AG04449 (cell line): ENCODE measurements at regions of chr1 and their contacts with region 1.

Region 1: DNA sequence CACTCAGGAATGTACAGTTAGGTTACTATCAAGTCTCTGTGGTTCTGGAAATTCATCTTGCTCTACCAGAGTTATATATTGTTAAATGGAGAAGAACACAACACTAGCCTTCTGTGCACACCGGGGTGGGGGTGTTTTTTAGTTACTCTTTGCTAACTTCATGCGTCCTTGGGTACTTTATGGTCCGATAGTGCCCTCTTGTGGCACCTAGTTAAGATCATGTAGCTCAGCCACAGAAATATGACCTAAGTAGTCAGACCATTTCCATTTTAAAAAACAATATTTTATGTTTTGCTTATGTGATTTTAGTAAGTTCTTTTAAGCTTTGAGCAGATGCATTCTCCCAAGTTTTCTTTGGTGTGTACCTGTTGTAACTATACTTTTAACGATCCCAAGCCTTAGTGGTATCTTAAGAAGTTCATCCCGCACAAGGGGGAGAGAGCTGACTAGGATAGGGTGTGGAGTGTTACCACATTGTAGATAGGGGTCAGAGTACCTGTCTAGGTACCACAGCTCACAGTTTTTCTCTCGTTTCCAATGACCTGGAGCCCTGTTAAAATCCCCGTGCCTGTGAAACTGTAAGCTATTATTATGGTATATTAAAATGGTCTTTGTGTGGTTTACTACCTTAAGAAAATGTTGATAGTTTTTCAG is 20.6 kb upstream of the SH3D21 start:
- DNase-seq: peak; percentile 69
- H3K4me3 ChIP-seq: no peak overlapping the region
- CTCF ChIP-seq: peak; percentile 54

Region 2: GRCh38 chr1:36099681-36100341 is 185.8 kb before region 1 on chr1:
- CTCF ChIA-PET with region 1: interaction called, 76 read pairs
- POLR2A ChIA-PET with region 1: no interaction called
- DNase-seq: no peak
- H3K4me3 ChIP-seq: no peak overlapping the region
- CTCF ChIP-seq: peak; percentile 91

Region 3: GRCh38 chr1:36155408-36156328 is 129.9 kb before region 1 on chr1 and contains the start of gene MAP7D1:
- CTCF ChIA-PET with region 1: interaction called, 81 read pairs
- POLR2A ChIA-PET with region 1: no interaction called
- DNase-seq: no peak
- H3K4me3 ChIP-seq: peak within 1 kb of the TSS; percentile 97
- CTCF ChIP-seq: no peak

Region 4: DNA sequence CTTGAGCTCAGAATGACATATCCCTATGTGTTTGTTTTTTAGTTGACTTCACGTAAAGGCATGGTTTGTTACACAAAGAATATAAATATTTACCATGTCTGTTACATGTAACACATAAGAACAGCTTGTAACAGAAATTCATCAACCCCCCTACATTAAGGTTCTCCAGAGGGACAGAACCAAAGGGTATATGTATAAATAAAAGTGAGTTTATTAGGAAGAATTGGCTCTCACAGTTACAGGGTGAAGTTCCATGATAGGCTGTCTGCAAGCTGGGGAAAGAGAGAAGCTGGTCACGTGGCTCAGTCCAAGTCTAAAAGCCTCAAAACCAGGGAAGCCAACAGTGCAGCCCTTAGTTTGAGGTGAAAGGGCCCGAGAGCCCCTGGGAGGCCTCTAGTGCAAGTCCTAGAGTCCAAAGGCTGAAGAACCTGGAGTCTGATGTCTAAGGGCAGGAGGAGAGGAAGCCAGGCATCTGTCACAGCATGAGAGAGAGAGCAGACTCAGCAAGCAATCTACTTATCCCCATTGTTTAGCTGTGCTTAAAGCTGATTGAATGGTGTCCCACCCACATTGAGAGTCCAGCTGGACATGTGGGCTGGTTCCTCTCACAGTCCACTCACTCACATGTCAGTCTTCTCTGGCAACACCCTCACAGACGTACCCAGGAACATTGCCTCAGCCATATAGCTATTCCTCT is 45.5 kb before region 1 on chr1:
- CTCF ChIA-PET with region 1: interaction called, 16 read pairs
- POLR2A ChIA-PET with region 1: no interaction called
- DNase-seq: no peak
- H3K4me3 ChIP-seq: no peak overlapping the region
- CTCF ChIP-seq: no peak

Region 5: DNA sequence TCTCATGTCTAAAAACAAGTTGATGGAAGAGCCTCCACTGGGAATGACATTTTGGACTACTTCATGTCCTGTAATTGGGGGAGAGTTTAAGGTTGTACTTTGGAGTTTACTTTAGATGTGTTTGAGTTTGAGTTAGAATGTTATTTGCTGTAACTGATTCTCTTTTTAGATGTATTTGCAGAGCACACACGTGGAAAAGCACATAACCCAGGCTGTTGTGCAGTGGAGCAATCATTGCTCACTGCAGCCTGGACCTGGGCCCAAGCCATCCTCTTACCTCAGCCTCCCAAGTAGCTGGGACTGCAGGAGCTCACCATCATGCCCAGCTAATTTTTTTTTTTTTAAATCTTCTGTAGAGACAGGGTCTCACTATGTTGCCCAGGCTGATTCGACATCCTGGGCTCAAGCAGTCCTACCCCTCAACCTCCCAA is 16.2 kb before region 1 on chr1:
- CTCF ChIA-PET with region 1: interaction called, 16 read pairs
- POLR2A ChIA-PET with region 1: no interaction called
- DNase-seq: no peak
- H3K4me3 ChIP-seq: no peak overlapping the region
- CTCF ChIP-seq: no peak